ENCODE measurements at regions of chr6 and their contacts with region 1.

Region 1: GRCh38 chr6:391559-392440 is at the start of gene IRF4:
- H3K4me3 Mint-ChIP-seq: peak within 1 kb of the TSS; percentile 93
- H3K27ac Mint-ChIP-seq: peak within 1 kb of the TSS; percentile 83
- H3K4me1 Mint-ChIP-seq: peaks cover 52% of the 10 kb centered on the region
- H3K27me3 Mint-ChIP-seq: peaks cover 48% of the 10 kb centered on the region

Region 2: GRCh38 chr6:188821-189655 is 202.8 kb before region 1 on chr6:
- intact Hi-C with region 1: loop called (anchors 5 kb)
- H3K4me3 Mint-ChIP-seq: no peak overlapping the region
- H3K27ac Mint-ChIP-seq: no peak overlapping the region
- H3K4me1 Mint-ChIP-seq: peaks cover 64% of the 10 kb centered on the region
- H3K27me3 Mint-ChIP-seq: peaks cover 4% of the 10 kb centered on the region

Region 3: GRCh38 chr6:291697-292505 is 99.9 kb before region 1 on chr6 and contains the start of gene DUSP22:
- intact Hi-C with region 1: loop called (anchors 5 kb)
- H3K4me3 Mint-ChIP-seq: peak within 1 kb of the TSS; percentile 89
- H3K27ac Mint-ChIP-seq: peak within 1 kb of the TSS; percentile 95
- H3K4me1 Mint-ChIP-seq: peaks cover 67% of the 10 kb centered on the region
- H3K27me3 Mint-ChIP-seq: no peaks in the 10 kb centered on the region

Region 4: DNA sequence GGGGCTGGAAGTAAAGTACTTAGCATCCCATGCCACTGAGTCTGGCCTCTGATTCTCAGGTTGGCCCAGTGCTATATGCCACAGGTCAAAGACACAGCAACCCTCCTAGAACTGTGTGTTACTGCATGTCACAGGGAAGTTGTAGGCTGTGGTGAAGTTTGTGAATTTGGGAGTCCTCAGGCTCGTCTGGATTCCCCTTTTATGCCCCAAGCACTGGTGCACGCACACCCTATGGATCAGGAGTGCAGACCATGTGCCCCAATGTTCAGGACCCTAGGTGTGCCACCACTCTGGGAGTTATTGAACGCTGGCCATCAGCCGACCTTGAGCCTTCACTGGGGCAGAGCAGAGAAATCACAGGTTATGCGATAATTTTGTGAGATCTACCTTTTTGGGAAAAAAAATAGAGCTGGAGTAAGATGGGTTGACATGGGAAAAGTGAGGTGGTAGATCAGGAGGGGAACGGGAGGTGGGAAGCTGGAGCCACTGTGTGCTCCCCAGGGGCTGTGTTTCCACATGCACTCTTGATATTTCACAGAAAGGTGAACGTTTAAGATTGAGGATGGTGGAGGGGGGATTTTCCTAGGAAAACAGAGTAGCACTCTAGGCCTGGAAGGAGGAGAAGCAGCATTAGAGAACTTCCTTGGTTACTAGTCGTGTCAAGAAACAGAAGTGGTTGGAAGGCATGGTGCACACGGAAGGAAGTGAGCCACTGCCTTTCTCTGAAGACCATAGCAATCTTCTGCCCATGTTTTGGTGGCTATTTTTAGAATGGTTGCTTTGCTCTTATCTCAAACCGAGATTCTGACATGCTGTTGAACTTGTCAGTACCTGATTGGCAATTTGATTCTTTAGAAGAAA is 55.4 kb before region 1 on chr6:
- intact Hi-C with region 1: loop called (anchors 5 kb)
- H3K4me3 Mint-ChIP-seq: peak overlapping the region; percentile 55
- H3K27ac Mint-ChIP-seq: peak overlapping the region; percentile 97
- H3K4me1 Mint-ChIP-seq: peaks cover 65% of the 10 kb centered on the region
- H3K27me3 Mint-ChIP-seq: no peaks in the 10 kb centered on the region

Region 5: GRCh38 chr6:356828-357251 is 35.0 kb before region 1 on chr6:
- intact Hi-C with region 1: loop called (anchors 5 kb)
- H3K4me3 Mint-ChIP-seq: no peak overlapping the region
- H3K27ac Mint-ChIP-seq: peak overlapping the region; percentile 86
- H3K4me1 Mint-ChIP-seq: peaks cover 91% of the 10 kb centered on the region
- H3K27me3 Mint-ChIP-seq: peaks cover 4% of the 10 kb centered on the region

Region 6: DNA sequence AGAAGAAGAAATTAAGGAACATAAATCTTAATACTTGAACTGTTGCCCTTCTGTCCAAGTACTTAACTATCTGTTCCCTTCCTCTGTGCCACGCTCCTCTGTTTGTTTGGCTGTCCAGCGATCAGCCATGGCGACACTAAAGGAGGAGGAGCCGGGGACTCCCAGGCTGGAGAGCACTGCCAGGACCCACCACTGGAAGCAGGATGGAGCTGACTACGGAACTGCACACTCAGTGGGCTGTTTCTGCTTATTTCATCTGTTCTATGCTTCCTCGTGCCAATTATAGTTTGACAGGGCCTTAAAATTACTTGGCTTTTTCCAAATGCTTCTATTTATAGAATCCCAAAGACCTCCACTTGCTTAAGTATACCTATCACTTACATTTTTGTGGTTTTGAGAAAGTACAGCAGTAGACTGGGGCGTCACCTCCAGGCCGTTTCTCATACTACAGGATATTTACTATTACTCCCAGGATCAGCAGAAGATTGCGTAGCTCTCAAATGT is 16.9 kb after region 1 on chr6:
- intact Hi-C with region 1: loop called (anchors 2 kb)
- H3K4me3 Mint-ChIP-seq: peak overlapping the region; percentile 20
- H3K27ac Mint-ChIP-seq: peak overlapping the region; percentile 86
- H3K4me1 Mint-ChIP-seq: peaks cover 49% of the 10 kb centered on the region
- H3K27me3 Mint-ChIP-seq: no peaks in the 10 kb centered on the region

Region 7: DNA sequence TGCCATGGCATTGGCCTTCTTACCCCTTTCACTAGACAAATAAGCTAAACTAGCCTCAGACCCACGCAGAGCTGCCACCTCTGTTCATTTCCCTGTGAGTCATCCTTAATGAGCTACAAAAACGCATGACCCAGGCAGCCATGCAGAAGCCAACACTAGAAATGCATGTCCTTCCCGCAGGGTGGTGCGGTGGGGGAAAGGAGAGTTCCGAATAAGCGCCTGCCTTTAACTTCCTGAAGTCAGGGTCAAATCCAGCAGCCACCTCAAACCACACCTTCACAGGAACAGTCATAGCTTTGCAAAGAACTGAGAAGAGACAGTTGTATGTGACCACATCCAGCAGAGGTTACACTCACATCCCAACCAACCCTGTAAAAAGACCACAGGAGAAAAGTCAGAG is 40.2 kb after region 1 on chr6:
- intact Hi-C with region 1: no loop called
- H3K4me3 Mint-ChIP-seq: no peak overlapping the region
- H3K27ac Mint-ChIP-seq: no peak overlapping the region
- H3K4me1 Mint-ChIP-seq: peaks cover 22% of the 10 kb centered on the region
- H3K27me3 Mint-ChIP-seq: peaks cover 21% of the 10 kb centered on the region

Region 8: DNA sequence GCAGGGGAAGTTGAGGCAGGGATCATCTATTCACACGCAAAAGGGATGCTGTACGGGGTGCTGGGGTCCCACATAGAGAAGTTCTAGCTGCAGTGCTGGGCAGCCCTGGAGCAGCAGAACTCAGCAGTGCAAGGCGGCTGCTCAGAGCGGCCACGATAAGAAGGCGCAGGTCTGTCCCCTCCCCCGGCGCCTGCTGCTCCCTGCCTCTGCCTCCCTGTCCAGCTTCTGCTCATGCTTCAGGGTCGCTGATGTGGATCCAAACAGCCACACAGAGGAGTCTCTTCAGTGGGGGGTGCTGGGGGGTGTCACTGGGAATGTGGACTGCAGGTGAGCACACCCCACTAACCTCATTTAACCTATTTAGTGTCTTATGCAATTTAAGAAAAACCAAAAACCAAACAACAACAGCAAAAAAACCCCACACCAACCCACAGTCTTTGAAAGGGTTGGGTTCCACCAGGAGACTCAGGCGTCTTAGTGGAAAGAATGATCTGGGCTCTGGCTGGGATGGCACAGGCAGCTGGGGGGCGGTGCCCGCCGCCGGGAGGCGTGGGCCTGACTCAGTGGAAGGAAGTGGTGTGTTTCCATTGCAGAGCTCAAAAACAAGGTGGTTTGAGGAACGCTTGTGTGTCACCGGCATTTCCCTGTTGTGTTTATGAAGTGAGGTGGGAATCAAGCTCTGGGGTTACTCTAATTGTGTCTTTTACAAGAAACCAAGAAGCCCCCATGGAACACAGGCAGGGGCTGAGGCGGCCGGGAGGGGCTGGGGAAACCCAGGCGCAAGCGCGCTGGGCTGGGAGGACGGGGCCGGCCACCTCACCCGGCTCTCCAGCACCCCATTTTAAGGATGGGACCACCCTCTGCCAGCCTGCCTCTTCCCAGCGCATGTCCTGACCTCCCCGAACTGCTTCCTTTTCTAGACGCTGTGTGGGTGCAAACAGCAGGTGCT is 54.9 kb after region 1 on chr6:
- intact Hi-C with region 1: no loop called
- H3K4me3 Mint-ChIP-seq: no peak overlapping the region
- H3K27ac Mint-ChIP-seq: no peak overlapping the region
- H3K4me1 Mint-ChIP-seq: peaks cover 6% of the 10 kb centered on the region
- H3K27me3 Mint-ChIP-seq: peaks cover 14% of the 10 kb centered on the region